ENCODE measurements at regions of chr18 and their contacts with region 1.

Region 1: DNA sequence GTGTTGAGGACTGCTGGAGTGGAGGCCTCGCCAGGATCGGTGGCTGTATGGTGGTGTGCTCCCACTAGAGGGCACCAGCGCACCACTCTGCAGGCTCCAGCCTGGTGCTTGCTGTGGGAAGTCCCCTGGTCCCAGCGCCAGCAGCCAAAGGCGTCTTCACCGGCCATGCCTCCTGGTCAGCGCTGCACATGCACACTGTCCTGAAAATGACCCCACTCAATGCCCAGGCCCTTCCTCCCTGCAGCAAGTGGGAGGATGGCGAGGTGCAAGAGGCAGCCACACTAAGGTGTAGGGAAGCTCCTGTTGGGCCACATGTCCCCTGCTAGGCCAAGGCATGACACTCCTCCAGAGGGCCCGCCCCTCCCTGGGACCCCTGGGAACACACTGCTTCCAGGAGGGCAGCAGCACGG is 136.5 kb downstream of the CTIF start:
- DNase-seq: peak; percentile 57 to 76
- H3K4me3 ChIP-seq: no peak overlapping the region
- H3K4me3 Mint-ChIP-seq: no peak overlapping the region
- H3K27ac Mint-ChIP-seq: no peak overlapping the region
- H3K4me1 ChIP-seq: no peaks in the 10 kb centered on the region
- H3K4me1 Mint-ChIP-seq: no peaks in the 10 kb centered on the region
- H3K27me3 ChIP-seq: no peaks in the 10 kb centered on the region
- H3K27me3 Mint-ChIP-seq: no peaks in the 10 kb centered on the region
- CTCF ChIP-seq: peak; percentile 54 to 61

Region 2: GRCh38 chr18:48419277-48420022 is 255.9 kb before region 1 on chr18:
- CTCF ChIA-PET with region 1: no interaction called
- POLR2A ChIA-PET with region 1: no interaction called
- intact Hi-C with region 1: no loop called
- DNase-seq: peak in 1 of 2 experiments; percentile 12
- H3K4me3 ChIP-seq: no peak overlapping the region
- H3K4me3 Mint-ChIP-seq: no peak overlapping the region
- H3K27ac Mint-ChIP-seq: no peak overlapping the region
- H3K4me1 ChIP-seq: no peaks in the 10 kb centered on the region
- H3K4me1 Mint-ChIP-seq: no peaks in the 10 kb centered on the region
- H3K27me3 ChIP-seq: no peaks in the 10 kb centered on the region
- H3K27me3 Mint-ChIP-seq: peaks cover 24% of the 10 kb centered on the region
- CTCF ChIP-seq: peak in 1 of 2 experiments; percentile 16

Region 3: DNA sequence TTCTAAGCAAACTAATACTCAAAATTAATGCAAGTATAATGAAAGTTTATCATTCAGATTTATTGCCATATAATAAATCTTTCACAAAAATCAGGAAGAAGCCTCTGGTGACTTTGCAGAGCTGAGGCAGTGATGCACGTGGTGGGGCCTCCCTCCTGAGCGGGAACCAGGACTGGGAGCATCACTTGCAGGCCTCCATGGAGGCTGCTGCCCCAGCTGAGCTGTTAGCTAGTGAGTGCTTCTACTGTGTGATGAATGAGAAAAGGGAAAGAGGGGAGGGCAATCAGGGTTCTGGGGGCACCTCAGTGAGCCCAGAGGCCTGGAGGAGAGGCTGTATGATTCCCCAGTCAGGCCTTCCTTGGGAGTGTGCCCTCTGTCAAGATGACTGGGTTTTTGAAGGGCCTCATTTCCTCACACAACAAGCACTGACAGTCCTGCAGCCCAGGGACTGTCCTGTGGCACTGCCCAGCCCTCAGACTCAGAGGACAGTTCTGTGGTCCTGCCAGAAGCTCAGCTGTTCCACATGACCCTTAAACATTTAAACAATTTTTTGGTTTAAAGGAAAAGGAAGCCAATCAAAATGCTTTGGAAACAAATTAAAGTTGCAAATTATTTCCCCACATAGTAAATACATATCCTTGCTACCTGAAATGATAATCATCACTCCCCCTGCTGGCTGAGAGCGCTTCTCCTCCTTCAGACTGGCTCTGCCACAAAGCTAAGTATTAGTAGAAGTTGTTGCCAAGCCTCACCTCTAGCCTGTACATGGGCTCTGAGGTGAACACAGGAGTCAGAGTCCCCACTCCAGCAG is 366.3 kb after region 1 on chr18:
- CTCF ChIA-PET with region 1: no interaction called
- POLR2A ChIA-PET with region 1: no interaction called
- intact Hi-C with region 1: loop called (anchors 10 kb)
- DNase-seq: peak in 1 of 2 experiments; percentile 30
- H3K4me3 ChIP-seq: no peak overlapping the region
- H3K4me3 Mint-ChIP-seq: no peak overlapping the region
- H3K27ac Mint-ChIP-seq: no peak overlapping the region
- H3K4me1 ChIP-seq: no peaks in the 10 kb centered on the region
- H3K4me1 Mint-ChIP-seq: no peaks in the 10 kb centered on the region
- H3K27me3 ChIP-seq: no peaks in the 10 kb centered on the region
- H3K27me3 Mint-ChIP-seq: no peaks in the 10 kb centered on the region
- CTCF ChIP-seq: peak in 1 of 2 experiments; percentile 35

Region 4: GRCh38 chr18:49238433-49239042 is 563.2 kb after region 1 on chr18:
- CTCF ChIA-PET with region 1: no interaction called
- POLR2A ChIA-PET with region 1: no interaction called
- intact Hi-C with region 1: loop called (anchors 5 kb)
- DNase-seq: no peak
- H3K4me3 ChIP-seq: no peak overlapping the region
- H3K4me3 Mint-ChIP-seq: no peak overlapping the region
- H3K27ac Mint-ChIP-seq: no peak overlapping the region
- H3K4me1 ChIP-seq: no peaks in the 10 kb centered on the region
- H3K4me1 Mint-ChIP-seq: no peaks in the 10 kb centered on the region
- H3K27me3 ChIP-seq: no peaks in the 10 kb centered on the region
- H3K27me3 Mint-ChIP-seq: no peaks in the 10 kb centered on the region
- CTCF ChIP-seq: peak in 1 of 2 experiments; percentile 8

Measured in Caco-2 (cell line).